Activated T-helper 1 cell treated with anti-CD3 and anti-CD28 coated beads, Interleukin-12 subunit alpha, Interleukin-12 subunit beta, Interleukin-2, Interleukin-4 antibody, amounts not matched to agents 30 ng/mL and 10 ng/mL and 1 ng/mL, durations not matched to agents 14 hours and 24 hours and 36 hours (primary cell): ENCODE measurements at regions of chr2 and their contacts with region 1.

Region 1: GRCh38 chr2:183038341-183039300 is at the start of gene NCKAP1:
- DNase-seq: peak; percentile 82
- H3K4me3 Mint-ChIP-seq: peak within 1 kb of the TSS; percentile 83
- H3K27ac Mint-ChIP-seq: peak within 1 kb of the TSS; percentile 69
- H3K4me1 Mint-ChIP-seq: peaks cover 28% of the 10 kb centered on the region
- H3K27me3 Mint-ChIP-seq: peaks cover 78% of the 10 kb centered on the region
- total RNA-seq, gene NCKAP1: 14.4 and 16.4 TPM in 2 replicates

Region 2: GRCh38 chr2:182949572-182950189 is 88.9 kb before region 1 on chr2:
- intact Hi-C with region 1: loop called (anchors 2 kb)
- DNase-seq: no peak
- H3K4me3 Mint-ChIP-seq: no peak overlapping the region
- H3K27ac Mint-ChIP-seq: no peak overlapping the region
- H3K4me1 Mint-ChIP-seq: peaks cover 32% of the 10 kb centered on the region
- H3K27me3 Mint-ChIP-seq: no peaks in the 10 kb centered on the region

Region 3: GRCh38 chr2:183078465-183079138 is 40.0 kb after region 1 on chr2 and contains the start of gene DUSP19:
- intact Hi-C with region 1: loop called (anchors 1 kb)
- DNase-seq: peak; percentile 78
- H3K4me3 Mint-ChIP-seq: peak within 1 kb of the TSS; percentile 91
- H3K27ac Mint-ChIP-seq: peak within 1 kb of the TSS; percentile 41
- H3K4me1 Mint-ChIP-seq: peaks cover 15% of the 10 kb centered on the region
- H3K27me3 Mint-ChIP-seq: peaks cover 7% of the 10 kb centered on the region
- total RNA-seq, gene DUSP19: 1.0 and 1.7 TPM in 2 replicates

Region 4: GRCh38 chr2:183124222-183124956 is 85.8 kb after region 1 on chr2 and contains the start of gene NUP35:
- intact Hi-C with region 1: loop called (anchors 1 kb)
- DNase-seq: peak; percentile 78
- H3K4me3 Mint-ChIP-seq: peak within 1 kb of the TSS; percentile 96
- H3K27ac Mint-ChIP-seq: peak within 1 kb of the TSS; percentile 98
- H3K4me1 Mint-ChIP-seq: peaks cover 29% of the 10 kb centered on the region
- H3K27me3 Mint-ChIP-seq: peaks cover 8% of the 10 kb centered on the region
- total RNA-seq, gene NUP35: 40.6 and 41.9 TPM in 2 replicates